ENCODE measurements at regions of chr22 and their contacts with region 1.

Region 1: GRCh38 chr22:30104501-30105156 is 24.4 kb downstream of the HORMAD2 start:
- DNase-seq: no peak
- ATAC-seq: no peak
- H3K4me3 ChIP-seq: no peak overlapping the region
- H3K27ac ChIP-seq: no peak overlapping the region
- H3K4me1 ChIP-seq: peaks cover 0 to 7% of the 10 kb centered on the region in 2 experiments; a peak in 2 of 4 replicates
- H3K27me3 ChIP-seq: no peaks in the 10 kb centered on the region
- CTCF ChIP-seq: no peak
- POLR2A ChIP-seq: no peak
- RAD21 ChIP-seq: no peak

Region 2: DNA sequence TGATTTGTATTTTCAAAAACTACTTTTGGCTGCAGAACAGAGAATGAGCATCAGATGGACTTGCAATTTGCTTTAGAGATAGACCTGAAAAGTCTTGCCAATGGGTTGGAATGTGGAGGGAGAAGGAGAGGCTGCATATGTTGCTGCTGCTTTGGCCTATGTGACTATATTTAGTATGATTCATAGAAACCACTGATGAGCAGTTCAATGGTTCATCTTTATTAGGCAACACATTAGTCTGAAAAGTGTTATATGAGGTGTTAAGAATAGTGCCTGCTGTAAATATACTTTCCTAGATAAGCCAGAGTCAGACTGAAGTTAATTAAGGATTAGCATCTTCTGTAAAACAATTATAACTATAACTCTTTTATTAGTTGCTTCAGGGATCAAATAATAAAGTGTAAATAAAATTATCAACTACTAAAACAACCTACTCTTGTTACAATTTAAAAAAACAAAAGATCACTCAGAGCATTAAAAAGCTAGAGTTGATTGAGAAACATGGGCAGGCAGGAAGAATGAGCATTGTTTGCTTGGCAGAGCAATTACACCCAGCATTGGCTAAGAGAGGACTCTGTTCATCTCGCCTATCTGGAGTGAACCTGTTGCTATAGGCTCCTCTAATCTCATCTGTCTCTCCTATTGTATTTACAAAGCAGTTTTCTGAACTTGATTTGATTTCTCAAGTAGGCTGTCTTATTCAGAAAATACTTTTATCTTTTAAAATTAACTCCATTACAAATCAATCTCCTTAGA is 11.9 kb after region 1 on chr22:
- CTCF ChIA-PET with region 1: interaction called, 12 read pairs
- POLR2A ChIA-PET with region 1: interaction called, 8 read pairs
- RAD21 ChIA-PET with region 1: interaction called in 1 of 2 experiments, 3 read pairs
- intact Hi-C with region 1: no loop called
- DNase-seq: no peak
- ATAC-seq: peak; percentile 55; the same call in 1 of the 2 replicates
- H3K4me3 ChIP-seq: no peak overlapping the region
- H3K27ac ChIP-seq: no peak overlapping the region
- H3K4me1 ChIP-seq: peaks cover 0 to 20% of the 10 kb centered on the region in 2 experiments; a peak in 2 of 4 replicates
- H3K27me3 ChIP-seq: no peaks in the 10 kb centered on the region
- CTCF ChIP-seq: no peak
- POLR2A ChIP-seq: no peak
- RAD21 ChIP-seq: 0 out of 2 replicates have a peak, but pooled peaks have one; percentile 3

Region 3: GRCh38 chr22:30205281-30206115 is 100.9 kb after region 1 on chr22:
- CTCF ChIA-PET with region 1: interaction called, 6 read pairs
- POLR2A ChIA-PET with region 1: interaction called, 10 read pairs
- RAD21 ChIA-PET with region 1: no interaction called
- intact Hi-C with region 1: no loop called
- DNase-seq: no peak
- ATAC-seq: no peak
- H3K4me3 ChIP-seq: peak overlapping the region; percentile 28 to 30; a peak in 3 of 4 replicates
- H3K27ac ChIP-seq: peak overlapping the region; percentile 96
- H3K4me1 ChIP-seq: peaks cover 59 to 84% of the 10 kb centered on the region in 2 experiments
- H3K27me3 ChIP-seq: no peaks in the 10 kb centered on the region
- CTCF ChIP-seq: no peak
- POLR2A ChIP-seq: no peak
- RAD21 ChIP-seq: no peak

Region 4: DNA sequence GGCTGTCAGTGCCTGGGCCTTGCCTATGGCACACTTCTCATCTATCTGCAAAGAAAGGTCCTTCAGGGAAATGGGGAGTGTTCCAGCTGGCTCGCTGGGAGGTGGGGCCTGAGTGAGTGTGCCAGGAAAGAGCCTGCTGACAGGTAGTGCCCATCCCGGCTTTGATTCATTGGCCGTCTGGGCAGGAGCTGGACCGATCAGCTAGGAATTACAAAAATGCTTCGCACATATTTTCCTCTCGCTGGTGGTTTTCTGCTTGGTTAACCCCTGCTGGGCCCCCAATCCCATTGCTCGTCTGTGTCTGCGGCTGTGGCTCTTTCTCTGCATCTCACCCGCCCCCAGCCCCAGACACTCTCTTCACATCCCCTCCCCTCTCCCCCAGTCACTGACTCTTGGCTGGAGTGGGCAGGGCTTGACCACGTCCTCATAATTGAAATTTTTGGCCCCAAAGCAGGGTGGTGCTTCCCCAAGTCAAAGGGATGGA is 131.1 kb after region 1 on chr22:
- CTCF ChIA-PET with region 1: interaction called, 4 read pairs
- POLR2A ChIA-PET with region 1: no interaction called
- RAD21 ChIA-PET with region 1: interaction called in 1 of 2 experiments, 3 read pairs
- intact Hi-C with region 1: loop called (anchors 5 kb)
- DNase-seq: no peak
- ATAC-seq: peak; percentile 73
- H3K4me3 ChIP-seq: peak overlapping the region in 1 of 2 experiments; percentile 30; a peak in 2 of 4 replicates
- H3K27ac ChIP-seq: peak overlapping the region; percentile 53
- H3K4me1 ChIP-seq: peaks cover 43 to 86% of the 10 kb centered on the region in 2 experiments
- H3K27me3 ChIP-seq: no peaks in the 10 kb centered on the region
- CTCF ChIP-seq: no peak
- POLR2A ChIP-seq: no peak
- RAD21 ChIP-seq: no peak

Region 5: DNA sequence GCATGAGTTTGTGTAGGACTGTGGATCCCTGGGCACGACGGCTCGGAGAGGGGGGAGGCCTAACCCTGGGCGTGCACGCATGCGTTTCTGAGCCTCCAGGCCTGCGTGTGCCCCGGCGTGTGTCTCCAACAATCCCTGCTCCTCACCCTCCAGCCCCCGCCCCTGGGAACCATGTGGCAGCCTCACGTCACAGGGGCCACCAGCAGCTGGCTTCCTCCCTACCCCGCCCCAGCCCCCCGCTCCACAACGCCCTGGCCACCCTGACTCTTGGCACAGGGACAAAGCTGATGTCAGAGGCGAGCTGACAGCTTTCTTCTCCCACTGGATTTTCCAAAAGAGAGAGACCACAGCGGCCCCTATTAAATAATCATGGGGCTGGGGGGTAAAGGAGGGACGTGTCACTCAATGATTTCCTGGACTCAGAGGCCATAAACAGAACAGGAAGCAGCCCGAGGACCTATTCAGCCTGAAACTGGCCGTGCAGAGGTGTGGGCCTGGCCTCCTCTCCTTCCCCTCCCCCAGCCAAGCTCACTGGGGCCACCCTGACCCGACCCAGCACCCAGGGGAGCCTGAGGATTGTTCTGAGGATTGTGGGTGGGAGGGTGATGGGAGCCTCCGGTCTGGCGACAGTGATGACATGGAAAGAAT is 148.7 kb after region 1 on chr22:
- CTCF ChIA-PET with region 1: interaction called, 30 read pairs
- POLR2A ChIA-PET with region 1: interaction called, 3 read pairs
- RAD21 ChIA-PET with region 1: interaction called, 8 read pairs
- intact Hi-C with region 1: loop called (anchors 1 kb)
- DNase-seq: no peak
- ATAC-seq: peak; percentile 21
- H3K4me3 ChIP-seq: peak overlapping the region; percentile 17 to 42
- H3K27ac ChIP-seq: peak overlapping the region; percentile 90
- H3K4me1 ChIP-seq: peaks cover 69 to 100% of the 10 kb centered on the region in 2 experiments
- H3K27me3 ChIP-seq: no peaks in the 10 kb centered on the region
- CTCF ChIP-seq: no peak
- POLR2A ChIP-seq: no peak
- RAD21 ChIP-seq: no peak

Region 6: DNA sequence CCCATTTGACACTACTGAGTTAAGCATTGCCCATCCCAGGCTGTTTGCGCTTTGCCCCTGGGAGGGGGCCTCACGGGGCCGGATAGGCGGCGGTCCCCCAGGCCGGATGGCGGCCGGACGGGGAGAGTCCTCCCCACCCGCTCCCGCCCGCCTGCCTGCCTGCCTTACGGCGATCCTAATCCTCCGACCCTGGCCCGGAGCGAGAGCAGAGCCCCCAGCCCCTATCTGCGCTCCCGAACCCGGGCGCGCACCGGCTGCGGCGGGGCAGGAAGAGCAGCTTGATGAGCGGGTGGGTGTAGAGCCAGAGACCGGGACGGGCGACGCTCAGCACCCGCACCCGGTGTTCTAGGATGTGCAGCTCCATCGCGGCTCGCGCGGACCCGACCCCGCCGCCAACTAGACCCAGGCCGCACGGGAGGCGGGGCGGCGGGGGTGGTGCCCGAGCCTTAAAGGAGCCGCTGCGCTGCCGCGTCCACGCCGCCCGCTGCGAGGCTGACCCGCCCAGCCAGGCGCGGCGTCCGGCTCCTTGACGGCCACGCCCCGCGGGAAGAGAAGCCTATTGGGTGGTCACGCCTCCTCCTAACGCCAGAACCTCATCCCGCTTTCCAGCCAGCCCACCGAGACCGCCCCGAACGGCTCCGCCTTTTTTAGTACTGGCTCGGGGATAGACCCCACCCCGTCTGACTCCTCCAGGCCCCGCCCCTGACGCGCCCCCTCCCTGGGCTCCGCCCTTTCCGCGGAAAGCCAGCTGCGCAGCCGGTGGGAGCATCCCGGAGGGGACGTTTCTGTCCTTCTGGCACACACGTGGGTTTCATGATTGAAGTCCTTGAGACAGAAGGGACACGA is 184.7 kb after region 1 on chr22 and contains the start of gene CASTOR1:
- CTCF ChIA-PET with region 1: interaction called, 16 read pairs
- POLR2A ChIA-PET with region 1: no interaction called
- RAD21 ChIA-PET with region 1: interaction called, 3 to 5 read pairs
- intact Hi-C with region 1: loop called (anchors 1 kb)
- DNase-seq: peak; percentile 96
- ATAC-seq: peak; percentile 87
- H3K4me3 ChIP-seq: peak within 1 kb of the TSS; percentile 65 to 80
- H3K27ac ChIP-seq: peak within 1 kb of the TSS; percentile 53
- H3K4me1 ChIP-seq: peaks cover 37 to 54% of the 10 kb centered on the region in 2 experiments
- H3K27me3 ChIP-seq: no peaks in the 10 kb centered on the region
- CTCF ChIP-seq: no peak
- POLR2A ChIP-seq: no peak
- RAD21 ChIP-seq: no peak
- total RNA-seq, gene CASTOR1: 6.5 TPM

Region 7: GRCh38 chr22:30386960-30387827 is 282.6 kb after region 1 on chr22 and contains the start of gene RNF215:
- CTCF ChIA-PET with region 1: interaction called, 8 read pairs
- POLR2A ChIA-PET with region 1: no interaction called
- RAD21 ChIA-PET with region 1: interaction called in 1 of 2 experiments, 4 read pairs
- intact Hi-C with region 1: loop called (anchors 2 kb)
- DNase-seq: peak; percentile 44
- ATAC-seq: peak; percentile 88
- H3K4me3 ChIP-seq: peak within 1 kb of the TSS; percentile 60 to 68
- H3K27ac ChIP-seq: peak within 1 kb of the TSS; percentile 69
- H3K4me1 ChIP-seq: peaks cover 3 to 31% of the 10 kb centered on the region in 2 experiments; a peak in 3 of 4 replicates
- H3K27me3 ChIP-seq: no peaks in the 10 kb centered on the region
- CTCF ChIP-seq: peak; percentile 77 to 78 (median 78)
- POLR2A ChIP-seq: no peak
- RAD21 ChIP-seq: peak; percentile 88
- total RNA-seq, gene RNF215: 20.2 TPM

Measured in HCT116 (cell line).